Activated B cell treated with CpG ODN at 0.5 μM for 24 hours (primary cell): ENCODE measurements at regions of chr6 and their contacts with region 1.

Region 1: GRCh38 chr6:31862344-31863227 is at the start of gene NEU1:
- DNase-seq: peak; percentile 93
- ATAC-seq: peak; percentile 91
- H3K4me3 Mint-ChIP-seq: peak within 1 kb of the TSS; percentile 95
- H3K27ac Mint-ChIP-seq: peak within 1 kb of the TSS; percentile 93
- H3K4me1 Mint-ChIP-seq: peaks cover 21% of the 10 kb centered on the region
- H3K27me3 Mint-ChIP-seq: no peaks in the 10 kb centered on the region
- CTCF ChIP-seq: no peak
- total RNA-seq, gene NEU1: 18.3 and 19.2 TPM in 2 replicates

Region 2: DNA sequence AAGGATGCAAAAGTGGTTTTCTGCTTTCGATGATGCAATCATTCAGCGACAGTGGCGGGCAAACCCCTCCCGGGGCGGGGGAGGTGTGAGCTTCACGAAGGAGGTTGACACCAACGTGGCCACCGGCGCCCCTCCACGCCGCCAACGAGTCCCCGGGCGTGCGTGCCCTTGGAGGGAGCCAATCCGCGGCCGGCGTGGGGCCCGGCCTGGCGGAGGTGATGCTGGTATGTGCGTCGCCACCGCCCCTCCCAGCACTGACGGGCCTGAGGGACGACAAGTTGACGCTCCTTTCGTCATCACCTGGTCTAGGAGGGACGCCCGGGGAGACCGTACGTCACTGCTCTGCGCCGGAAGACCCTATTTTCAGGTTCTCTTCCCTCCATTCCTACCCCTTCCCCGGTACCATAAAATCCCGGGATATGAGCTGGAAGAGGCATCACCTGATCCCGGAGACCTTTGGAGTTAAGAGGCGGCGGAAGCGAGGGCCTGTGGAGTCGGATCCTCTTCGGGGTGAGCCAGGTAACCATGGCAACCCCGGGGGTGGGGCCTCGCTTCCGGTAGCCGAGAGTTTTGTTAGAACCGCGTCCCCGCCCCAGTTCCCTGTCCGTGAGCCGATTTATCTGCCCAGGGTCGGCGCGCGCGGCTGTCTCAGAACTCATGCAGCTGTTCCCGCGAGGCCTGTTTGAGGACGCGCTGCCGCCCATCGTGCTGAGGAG is 109.6 kb after region 1 on chr6 and contains the start of gene DXO:
- CTCF ChIA-PET with region 1: no interaction called
- POLR2A ChIA-PET with region 1: interaction called, 4 read pairs
- intact Hi-C with region 1: loop called (anchors 1 kb)
- DNase-seq: peak; percentile 96
- ATAC-seq: peak; percentile 89
- H3K4me3 Mint-ChIP-seq: peak within 1 kb of the TSS; percentile 98
- H3K27ac Mint-ChIP-seq: peak within 1 kb of the TSS; percentile 100
- H3K4me1 Mint-ChIP-seq: peaks cover 39% of the 10 kb centered on the region
- H3K27me3 Mint-ChIP-seq: no peaks in the 10 kb centered on the region
- CTCF ChIP-seq: no peak
- total RNA-seq, gene DXO: 23.7 and 29.4 TPM in 2 replicates

Region 3: GRCh38 chr6:32177788-32178546 is 315.4 kb after region 1 on chr6 and contains the start of gene RNF5:
- CTCF ChIA-PET with region 1: no interaction called
- POLR2A ChIA-PET with region 1: no interaction called
- intact Hi-C with region 1: loop called (anchors 2 kb)
- DNase-seq: peak; percentile 63
- ATAC-seq: peak; percentile 82
- H3K4me3 Mint-ChIP-seq: peak within 1 kb of the TSS; percentile 96
- H3K27ac Mint-ChIP-seq: peak within 1 kb of the TSS; percentile 99
- H3K4me1 Mint-ChIP-seq: peaks cover 54% of the 10 kb centered on the region
- H3K27me3 Mint-ChIP-seq: no peaks in the 10 kb centered on the region
- CTCF ChIP-seq: no peak
- total RNA-seq, gene RNF5: 39.7 and 41.8 TPM in 2 replicates